Heart right ventricle (tissue), 16 donors: ENCODE measurements at regions of chrX and their contacts with region 1.

Region 1: DNA sequence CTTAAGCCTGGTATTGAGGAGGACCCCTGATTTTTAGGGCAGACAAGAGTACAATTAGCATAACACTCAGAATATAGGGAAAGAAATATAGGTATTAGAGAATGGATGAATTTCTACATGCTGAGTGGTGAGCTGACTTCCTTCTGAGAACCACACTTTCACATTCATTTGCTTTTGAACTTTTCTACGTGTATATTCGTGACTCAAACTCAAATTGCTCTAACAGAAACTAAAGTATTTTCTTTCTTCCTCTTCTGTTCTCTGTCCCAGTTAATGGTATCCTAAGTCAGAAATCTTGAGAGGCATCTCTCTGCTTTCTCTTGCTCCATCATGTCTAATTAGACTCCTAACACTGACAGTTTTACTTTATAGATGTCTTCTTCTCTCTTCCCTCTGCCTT is 103.2 kb upstream of the CITED1 start:
- DNase-seq: no peak
- ATAC-seq: no peak
- H3K4me3 ChIP-seq: no peak overlapping the region
- H3K27ac ChIP-seq: no peak overlapping the region
- H3K4me1 ChIP-seq: peaks cover 0 to 6% (median 0%) of the 10 kb centered on the region in 9 donors
- H3K27me3 ChIP-seq: peaks cover 0 to 8% (median 0%) of the 10 kb centered on the region in 7 donors
- CTCF ChIP-seq: no peak

Region 2: GRCh38 chrX:73028876-73029275 is 620.0 kb after region 1 on chrX:
- intact Hi-C with region 1: loop called in 1 of 10 experiments (anchors 5 kb)
- DNase-seq: no peak
- ATAC-seq: no peak
- H3K4me3 ChIP-seq: no peak overlapping the region
- H3K27ac ChIP-seq: no peak overlapping the region
- H3K4me1 ChIP-seq: no peaks in the 10 kb centered on the region
- H3K27me3 ChIP-seq: no peaks in the 10 kb centered on the region
- CTCF ChIP-seq: no peak